Naive thymus-derived CD4-positive, alpha-beta T cell (primary cell): ENCODE measurements at regions of chr1 and their contacts with region 1.

Region 1: DNA sequence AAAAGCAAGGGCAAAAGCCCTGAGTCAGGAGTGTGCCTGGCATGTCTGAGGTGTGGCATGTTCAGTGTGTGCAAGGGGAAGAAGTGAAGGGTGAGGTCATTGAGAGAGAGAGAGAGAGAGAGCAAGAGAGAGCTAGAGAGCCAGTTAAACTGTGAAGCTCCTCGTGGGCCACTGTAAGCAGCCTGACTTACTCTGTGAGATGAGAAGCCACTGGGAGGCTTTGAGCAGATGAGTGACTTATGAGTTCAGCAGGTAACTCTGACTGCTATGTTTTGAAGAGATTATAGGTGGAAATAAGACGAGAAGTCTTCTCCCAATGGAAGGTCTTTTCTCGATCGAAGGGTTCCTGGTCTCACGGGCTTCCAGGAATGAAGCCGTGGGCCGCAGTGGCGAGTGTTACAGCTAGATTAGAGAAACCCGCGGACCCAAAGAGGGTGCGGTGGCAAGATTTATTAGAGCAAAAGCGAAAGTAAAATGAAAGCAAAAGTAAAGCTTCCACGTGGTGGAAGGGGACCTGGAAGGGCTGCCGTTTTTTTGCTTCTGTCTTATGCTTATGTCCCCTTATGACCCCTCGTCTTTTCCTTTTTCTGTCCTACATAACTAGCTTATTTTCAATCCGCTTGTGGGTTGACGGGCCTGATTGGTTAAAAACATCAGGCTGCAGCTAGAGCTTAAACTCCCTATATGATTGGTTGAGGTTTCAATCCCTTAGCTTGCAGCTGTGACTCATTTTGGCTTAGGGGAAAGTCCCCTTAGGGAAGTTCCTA is 323.1 kb upstream of the FAM78B start:
- DNase-seq: peak; percentile 29 to 69 (median 61)
- ATAC-seq: peak; percentile 83
- H3K4me3 ChIP-seq: peak overlapping the region; percentile 92
- H3K4me3 Mint-ChIP-seq: no peak overlapping the region
- H3K27ac ChIP-seq: peak overlapping the region; percentile 81
- H3K27ac Mint-ChIP-seq: no peak overlapping the region
- H3K4me1 ChIP-seq: peaks cover 15 to 17% of the 10 kb centered on the region in 2 donors
- H3K4me1 Mint-ChIP-seq: peaks cover 0 to 20% (median 0%) of the 10 kb centered on the region in 7 donors
- H3K27me3 ChIP-seq: no peaks in the 10 kb centered on the region
- H3K27me3 Mint-ChIP-seq: peaks cover 0 to 2% (median 0%) of the 10 kb centered on the region in 5 donors

Region 2: DNA sequence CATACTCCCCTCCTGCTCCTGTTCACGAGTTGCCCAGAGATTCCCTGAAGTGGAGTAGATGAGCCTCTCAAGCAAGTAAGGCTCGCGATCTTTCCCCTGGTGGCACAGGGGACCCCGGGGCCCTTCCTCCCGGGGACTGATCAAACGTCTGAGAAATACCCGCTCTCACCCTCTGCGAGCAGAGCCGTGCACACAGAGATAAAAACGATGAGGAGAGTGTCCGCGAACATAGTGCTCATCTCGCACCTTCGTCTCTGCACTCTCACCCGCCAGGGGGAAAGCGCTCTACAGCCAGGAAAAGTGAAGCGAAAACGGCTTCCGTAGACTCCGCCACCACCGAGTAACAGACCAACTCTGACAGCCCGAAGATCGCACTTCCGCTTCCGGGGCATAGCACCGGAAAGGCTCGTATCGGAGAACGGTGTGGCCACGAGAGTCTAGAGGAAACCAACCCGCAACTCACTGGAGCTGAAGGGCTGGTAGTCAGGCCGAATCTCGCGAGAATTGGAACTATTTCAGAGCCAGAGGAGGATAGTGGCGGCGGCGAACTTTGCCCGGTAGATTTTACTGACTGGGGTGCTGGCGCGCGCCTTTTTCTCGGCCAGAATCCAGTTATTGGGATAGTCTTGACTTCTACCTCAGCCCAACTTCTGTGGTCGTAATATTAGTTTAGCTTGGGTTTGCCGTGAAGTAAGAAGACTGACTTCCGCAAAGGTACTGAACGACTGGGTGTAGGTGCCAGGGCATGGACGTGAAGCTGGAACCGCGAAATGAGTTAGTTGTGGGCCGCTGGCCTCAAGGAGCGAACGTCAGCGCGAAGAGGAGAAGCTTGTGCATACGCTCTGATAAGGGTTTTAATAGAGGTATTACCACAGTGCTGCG is 721.1 kb before region 1 on chr1 and contains the start of gene TMCO1:
- CTCF ChIA-PET with region 1: no interaction called
- POLR2A ChIA-PET with region 1: no interaction called
- intact Hi-C with region 1: loop called in 1 of 2 experiments (anchors 2 kb)
- DNase-seq: peak; percentile 76 to 97 (median 94)
- ATAC-seq: peak; percentile 98
- H3K4me3 ChIP-seq: peak within 1 kb of the TSS; percentile 94
- H3K4me3 Mint-ChIP-seq: peak within 1 kb of the TSS; percentile 90 to 100 (median 97)
- H3K27ac ChIP-seq: peak within 1 kb of the TSS; percentile 85
- H3K27ac Mint-ChIP-seq: peak within 1 kb of the TSS; percentile 91 to 100 (median 98)
- H3K4me1 ChIP-seq: peaks cover 19 to 32% of the 10 kb centered on the region in 2 donors
- H3K4me1 Mint-ChIP-seq: peaks cover 44 to 83% (median 68%) of the 10 kb centered on the region in 7 donors
- H3K27me3 ChIP-seq: no peaks in the 10 kb centered on the region
- H3K27me3 Mint-ChIP-seq: no peaks in the 10 kb centered on the region
- total RNA-seq, gene TMCO1: 30.4 to 97.1 (median 49.8) TPM

Region 3: GRCh38 chr1:166166695-166167571 is 322.9 kb before region 1 on chr1 and contains the start of gene FAM78B:
- CTCF ChIA-PET with region 1: no interaction called
- POLR2A ChIA-PET with region 1: no interaction called
- intact Hi-C with region 1: loop called in 1 of 2 experiments (anchors 10 kb)
- DNase-seq: peak in 7 of 9 donors; percentile 5 to 59 (median 25)
- ATAC-seq: peak; percentile 67
- H3K4me3 ChIP-seq: no peak within 1 kb of the TSS
- H3K4me3 Mint-ChIP-seq: peak within 1 kb of the TSS; percentile 62 to 85 (median 78)
- H3K27ac ChIP-seq: no peak within 1 kb of the TSS
- H3K27ac Mint-ChIP-seq: no peak within 1 kb of the TSS
- H3K4me1 ChIP-seq: peaks cover 0 to 7% of the 10 kb centered on the region in 2 donors
- H3K4me1 Mint-ChIP-seq: peaks cover 4 to 25% (median 21%) of the 10 kb centered on the region in 7 donors
- H3K27me3 ChIP-seq: peaks cover 0 to 4% of the 10 kb centered on the region in 2 donors
- H3K27me3 Mint-ChIP-seq: peaks cover 32 to 61% (median 48%) of the 10 kb centered on the region in 5 donors
- total RNA-seq, gene FAM78B: 0.45 to 0.58 TPM in 2 of 5 experiments, not detected in the others

Region 4: DNA sequence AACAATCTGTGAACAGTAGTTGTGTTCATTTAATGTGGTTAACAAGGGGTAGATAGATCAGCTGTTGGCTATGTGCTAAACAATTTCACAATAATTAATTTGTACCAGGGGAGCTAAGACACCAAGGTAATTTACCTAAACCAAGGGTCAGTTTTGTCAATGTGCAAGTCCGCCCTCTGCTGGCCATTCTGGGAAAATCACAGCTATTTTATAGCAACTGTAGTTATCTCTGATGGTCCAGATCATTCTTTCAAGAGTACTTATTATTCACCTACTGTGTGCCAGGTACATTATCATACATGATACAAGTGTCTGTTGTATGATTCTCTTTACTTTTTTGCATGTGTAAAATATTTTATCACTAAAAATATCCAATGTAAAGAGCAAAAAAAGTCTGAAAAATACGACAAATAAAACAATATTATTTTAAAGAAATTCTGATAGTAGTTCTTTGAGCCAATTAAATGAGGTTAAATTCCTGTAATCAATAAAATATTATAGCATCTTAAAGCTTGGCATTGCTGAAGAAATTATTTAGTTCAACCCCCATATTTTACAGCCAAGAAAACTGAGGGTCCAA is 10.7 kb before region 1 on chr1:
- CTCF ChIA-PET with region 1: interaction called, 24 read pairs
- POLR2A ChIA-PET with region 1: interaction called, 3 read pairs
- intact Hi-C with region 1: no loop called
- DNase-seq: peak in 7 of 9 donors; percentile 17 to 41 (median 29)
- ATAC-seq: peak; percentile 62
- H3K4me3 ChIP-seq: no peak overlapping the region
- H3K4me3 Mint-ChIP-seq: no peak overlapping the region
- H3K27ac ChIP-seq: no peak overlapping the region
- H3K27ac Mint-ChIP-seq: no peak overlapping the region
- H3K4me1 ChIP-seq: no peaks in the 10 kb centered on the region
- H3K4me1 Mint-ChIP-seq: peaks cover 0 to 3% (median 0%) of the 10 kb centered on the region in 7 donors
- H3K27me3 ChIP-seq: no peaks in the 10 kb centered on the region
- H3K27me3 Mint-ChIP-seq: peaks cover 0 to 6% (median 0%) of the 10 kb centered on the region in 5 donors

Region 5: DNA sequence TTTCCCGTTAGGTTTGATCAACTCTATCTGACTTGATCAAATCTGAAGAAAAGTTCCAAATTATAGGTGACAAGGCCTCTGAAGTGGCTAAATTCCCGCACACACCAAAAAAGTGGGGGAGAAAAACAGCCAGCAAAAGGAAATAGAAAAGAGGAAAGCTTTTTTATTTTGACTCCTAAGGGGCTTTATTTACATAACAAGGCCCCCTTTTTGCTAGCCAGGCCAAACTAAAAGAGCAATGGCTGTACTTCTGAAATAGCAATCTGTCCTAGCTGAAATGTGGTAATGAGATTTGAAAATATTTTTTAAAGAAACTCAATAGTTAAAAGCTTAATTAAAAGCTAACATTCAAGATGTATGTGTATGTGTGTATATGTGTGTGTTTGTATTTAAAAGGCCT is 37.9 kb after region 1 on chr1:
- CTCF ChIA-PET with region 1: no interaction called
- POLR2A ChIA-PET with region 1: no interaction called
- intact Hi-C with region 1: no loop called
- DNase-seq: no peak
- ATAC-seq: no peak
- H3K4me3 ChIP-seq: no peak overlapping the region
- H3K4me3 Mint-ChIP-seq: no peak overlapping the region
- H3K27ac ChIP-seq: no peak overlapping the region
- H3K27ac Mint-ChIP-seq: no peak overlapping the region
- H3K4me1 ChIP-seq: no peaks in the 10 kb centered on the region
- H3K4me1 Mint-ChIP-seq: no peaks in the 10 kb centered on the region
- H3K27me3 ChIP-seq: no peaks in the 10 kb centered on the region
- H3K27me3 Mint-ChIP-seq: peaks cover 0 to 24% (median 16%) of the 10 kb centered on the region in 5 donors

Region 6: GRCh38 chr1:166838766-166839599 is 349.1 kb after region 1 on chr1 and contains the start of gene POGK:
- CTCF ChIA-PET with region 1: no interaction called
- POLR2A ChIA-PET with region 1: no interaction called
- intact Hi-C with region 1: loop called in 1 of 2 experiments (anchors 2 kb)
- DNase-seq: peak; percentile 70 to 89 (median 77)
- ATAC-seq: peak; percentile 95
- H3K4me3 ChIP-seq: peak within 1 kb of the TSS; percentile 60
- H3K4me3 Mint-ChIP-seq: peak within 1 kb of the TSS; percentile 89 to 97 (median 92)
- H3K27ac ChIP-seq: peak within 1 kb of the TSS; percentile 90
- H3K27ac Mint-ChIP-seq: peak within 1 kb of the TSS; percentile 91 to 100 (median 94)
- H3K4me1 ChIP-seq: peaks cover 13 to 21% of the 10 kb centered on the region in 2 donors
- H3K4me1 Mint-ChIP-seq: peaks cover 23 to 55% (median 48%) of the 10 kb centered on the region in 7 donors
- H3K27me3 ChIP-seq: no peaks in the 10 kb centered on the region
- H3K27me3 Mint-ChIP-seq: no peaks in the 10 kb centered on the region
- total RNA-seq, gene POGK: 24.7 to 38.7 (median 36.9) TPM

Region 7: DNA sequence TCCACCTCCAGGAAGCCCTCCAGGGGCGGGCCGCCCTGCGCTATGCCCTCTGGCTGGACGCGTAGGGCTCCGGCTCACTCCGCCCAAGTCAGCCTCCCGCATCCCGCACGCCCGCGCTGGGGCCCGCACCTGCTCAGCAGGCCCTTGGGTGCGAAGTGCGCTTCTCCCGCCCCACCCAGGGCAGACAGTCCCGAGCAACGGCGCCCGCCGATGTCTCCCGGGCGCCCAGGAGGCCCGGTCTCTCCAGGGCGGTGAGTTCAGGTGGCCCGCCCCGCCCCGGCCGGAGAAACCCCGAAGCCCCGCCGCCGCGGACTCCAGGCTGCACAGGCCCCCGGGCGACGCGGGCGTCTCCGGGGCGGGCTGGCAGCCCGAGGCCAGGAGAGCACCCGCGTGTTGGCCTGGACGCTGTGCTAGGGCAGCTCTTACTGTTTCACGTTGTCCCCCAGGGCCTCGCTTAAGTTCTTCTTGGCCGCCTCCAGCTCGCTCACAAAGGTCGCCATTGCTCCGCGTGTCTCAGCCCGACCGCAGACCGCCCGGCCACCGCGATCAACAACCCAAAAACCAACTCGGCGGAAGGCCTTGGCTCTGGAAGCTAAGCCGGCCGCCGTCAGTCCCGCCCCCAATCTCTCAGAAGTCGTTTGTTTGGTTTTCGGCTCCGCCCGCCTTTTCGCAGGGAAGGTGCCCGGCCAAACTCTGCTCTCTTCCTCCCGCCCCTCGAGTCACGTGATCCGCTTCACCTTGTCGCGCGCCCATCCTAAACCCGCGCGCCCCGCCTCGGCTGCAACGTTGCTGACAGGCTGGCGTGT is 386.1 kb after region 1 on chr1 and contains the start of gene TADA1:
- CTCF ChIA-PET with region 1: no interaction called
- POLR2A ChIA-PET with region 1: no interaction called
- intact Hi-C with region 1: loop called in 1 of 2 experiments (anchors 1 kb)
- DNase-seq: peak; percentile 87 to 97 (median 96)
- ATAC-seq: peak; percentile 95
- H3K4me3 ChIP-seq: peak within 1 kb of the TSS; percentile 64
- H3K4me3 Mint-ChIP-seq: peak within 1 kb of the TSS; percentile 93 to 100 (median 96)
- H3K27ac ChIP-seq: peak within 1 kb of the TSS; percentile 83
- H3K27ac Mint-ChIP-seq: peak within 1 kb of the TSS; percentile 75 to 99 (median 98)
- H3K4me1 ChIP-seq: peaks cover 10 to 12% of the 10 kb centered on the region in 2 donors
- H3K4me1 Mint-ChIP-seq: peaks cover 43 to 63% (median 55%) of the 10 kb centered on the region in 7 donors
- H3K27me3 ChIP-seq: no peaks in the 10 kb centered on the region
- H3K27me3 Mint-ChIP-seq: peaks cover 0 to 11% (median 0%) of the 10 kb centered on the region in 5 donors
- total RNA-seq, gene TADA1: 9.4 to 16.2 (median 15.6) TPM